Keratinocyte (primary cell): ENCODE measurements at regions of chr6 and their contacts with region 1.

Region 1: GRCh38 chr6:142112451-142113061 is 20.2 kb upstream of the GJE1 start:
- DNase-seq: no peak
- H3K4me3 ChIP-seq: no peak overlapping the region
- H3K27ac ChIP-seq: no peak overlapping the region
- H3K4me1 ChIP-seq: no peaks in the 10 kb centered on the region
- H3K27me3 ChIP-seq: no peaks in the 10 kb centered on the region
- CTCF ChIP-seq: peak; percentile 49 to 72 (median 66)

Region 2: GRCh38 chr6:141677598-141678211 is 434.9 kb before region 1 on chr6:
- dilution Hi-C with region 1: loop called (anchors 25 kb)
- DNase-seq: no peak
- H3K4me3 ChIP-seq: no peak overlapping the region
- H3K27ac ChIP-seq: no peak overlapping the region
- H3K4me1 ChIP-seq: no peaks in the 10 kb centered on the region
- H3K27me3 ChIP-seq: no peaks in the 10 kb centered on the region
- CTCF ChIP-seq: peak in 2 of 3 experiments; percentile 43 to 55

Region 3: DNA sequence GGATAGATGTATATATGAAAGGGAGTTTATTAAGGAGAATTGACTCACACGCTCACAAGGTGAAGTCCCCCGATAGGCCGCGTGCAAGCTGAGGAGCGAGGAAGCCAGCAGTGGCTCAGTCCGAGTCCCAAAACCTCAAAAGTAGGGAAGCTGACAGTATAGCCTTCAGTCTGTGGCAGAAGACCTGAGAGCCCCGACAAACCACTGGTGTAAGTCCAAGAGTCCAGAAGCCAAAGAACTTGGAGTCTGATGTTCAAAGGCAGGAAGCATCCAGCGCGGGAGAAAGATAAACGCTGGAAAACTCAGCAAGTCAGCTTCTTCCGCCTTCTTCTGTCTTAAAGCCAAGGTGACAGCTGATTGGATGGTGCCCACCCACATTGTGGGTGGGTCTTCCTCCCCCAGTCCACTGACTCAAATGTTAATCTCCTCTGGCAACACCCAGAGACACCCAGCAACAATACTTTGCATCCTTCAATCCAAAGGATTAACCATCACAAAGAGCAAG is 82.4 kb before region 1 on chr6:
- dilution Hi-C with region 1: no loop called
- DNase-seq: no peak
- H3K4me3 ChIP-seq: no peak overlapping the region
- H3K27ac ChIP-seq: no peak overlapping the region
- H3K4me1 ChIP-seq: peaks cover 2% of the 10 kb centered on the region
- H3K27me3 ChIP-seq: no peaks in the 10 kb centered on the region
- CTCF ChIP-seq: no peak